K562 (cell line): ENCODE measurements at regions of chr12 and their contacts with region 1.

Region 1: GRCh38 chr12:118103604-118104382 is at the start of gene VSIG10:
- DNase-seq: peak; percentile 40 to 78 (median 60)
- ATAC-seq: peak; percentile 82
- H3K4me3 ChIP-seq: peak within 1 kb of the TSS; percentile 42
- H3K27ac ChIP-seq: no peak within 1 kb of the TSS
- H3K4me1 ChIP-seq: peaks cover 0 to 15% of the 10 kb centered on the region in 2 experiments; a peak in 3 of 5 replicates
- H3K27me3 ChIP-seq: peaks cover 23 to 33% of the 10 kb centered on the region in 2 experiments; a peak in 4 of 5 replicates
- CTCF ChIP-seq: no peak
- EP300 ChIP-seq: no peak
- POLR2A ChIP-seq: no peak
- RAD21 ChIP-seq: no peak
- polyA plus RNA-seq, gene VSIG10: 4.7 to 5.3 TPM

Region 2: DNA sequence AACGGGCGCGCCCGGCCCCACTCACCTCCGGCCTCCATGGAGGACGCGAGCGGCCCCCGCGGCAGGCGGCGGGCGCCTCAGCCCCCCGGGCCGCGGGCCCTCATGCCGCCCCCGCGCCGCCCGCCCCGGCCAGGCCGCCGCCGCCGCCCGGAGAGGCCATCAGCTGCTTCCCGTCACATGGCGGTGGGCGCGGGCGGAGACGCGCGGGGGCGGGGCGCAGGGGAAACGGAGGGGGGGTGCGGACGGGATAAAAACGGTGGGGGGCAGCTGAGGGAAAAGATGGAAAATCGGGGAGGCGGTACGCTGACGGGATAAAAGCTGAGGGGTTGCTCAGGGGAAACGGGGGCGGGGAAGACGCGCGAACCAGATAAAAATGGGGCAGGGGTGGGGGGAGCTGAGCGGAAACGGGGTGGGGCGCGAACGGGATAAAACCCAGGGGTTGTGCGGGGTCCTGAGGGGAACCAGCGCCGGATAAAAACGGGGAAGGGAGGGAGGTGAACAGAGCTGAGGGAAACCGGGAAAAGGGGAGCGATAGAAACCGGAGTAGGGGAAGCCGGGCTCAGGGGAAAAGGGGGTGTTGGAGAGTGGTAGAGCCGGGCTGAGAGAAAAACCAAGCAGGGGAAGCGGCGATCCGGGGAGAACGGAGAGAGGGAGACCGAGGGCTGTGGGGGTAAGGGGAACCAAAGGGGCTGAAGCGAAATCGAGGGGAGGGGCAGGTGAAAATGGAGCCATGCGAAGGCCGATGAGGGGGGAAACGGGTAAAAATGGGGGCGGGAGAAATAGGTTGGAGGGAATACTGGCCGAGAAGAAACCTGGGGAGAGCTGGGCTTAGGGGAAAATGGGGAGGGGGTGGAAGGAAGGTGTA is 42.5 kb before region 1 on chr12 and contains the start of gene WSB2:
- CTCF ChIA-PET with region 1: no interaction called
- POLR2A ChIA-PET with region 1: interaction called, 3 read pairs
- in situ Hi-C with region 1: no loop called
- intact Hi-C with region 1: loop called (anchors 5 kb)
- DNase-seq: peak; percentile 80 to 92 (median 86)
- ATAC-seq: peak; percentile 25
- H3K4me3 ChIP-seq: peak within 1 kb of the TSS; percentile 85
- H3K27ac ChIP-seq: peak within 1 kb of the TSS; percentile 98
- H3K4me1 ChIP-seq: peaks cover 15 to 38% of the 10 kb centered on the region in 2 experiments
- H3K27me3 ChIP-seq: no peaks in the 10 kb centered on the region
- CTCF ChIP-seq: no peak
- EP300 ChIP-seq: no peak
- POLR2A ChIP-seq: peak; percentile 83
- RAD21 ChIP-seq: no peak
- polyA plus RNA-seq, gene WSB2: 31.4 to 32.4 TPM